Adrenal gland (tissue), 19 donors: ENCODE measurements at regions of chr15 and their contacts with region 1.

Region 1: DNA sequence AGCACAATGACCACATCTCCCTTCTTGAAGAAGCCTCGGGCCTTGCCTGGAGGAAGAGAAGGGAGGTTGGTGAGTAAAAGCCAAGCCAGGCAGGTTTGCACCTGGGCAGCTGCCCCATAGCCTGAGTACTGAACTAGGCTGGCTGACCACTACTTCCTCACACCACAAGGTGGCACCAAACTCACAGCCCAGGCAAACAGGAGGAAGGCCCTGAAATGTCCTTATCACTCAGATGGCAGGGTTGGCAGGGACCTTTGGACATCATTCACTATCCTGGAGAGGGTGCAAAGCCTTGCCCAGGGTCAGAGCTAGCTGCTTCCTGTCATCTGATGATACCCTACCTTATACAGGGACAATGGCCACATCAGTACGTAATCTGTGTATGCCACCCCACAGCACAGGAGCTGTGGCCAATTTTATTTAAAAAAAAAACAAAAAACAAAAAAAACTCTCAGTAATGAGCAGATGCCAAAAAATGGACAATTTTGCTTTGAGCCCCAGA is 2.2 kb upstream of the GRAMD2A start:
- DNase-seq: peak; percentile 85 to 95 (median 90)
- H3K4me3 ChIP-seq: no peak overlapping the region
- H3K27ac ChIP-seq: peak overlapping the region in 3 of 5 donors; percentile 37 to 80 (median 78)
- H3K4me1 ChIP-seq: peaks cover 0 to 33% of the 10 kb centered on the region in 2 donors
- H3K27me3 ChIP-seq: no peaks in the 10 kb centered on the region
- CTCF ChIP-seq: peak; percentile 83 to 96 (median 94)
- POLR2A ChIP-seq: no peak

Region 2: GRCh38 chr15:72231066-72231846 is 31.5 kb after region 1 on chr15 and contains the start of gene PKM:
- intact Hi-C with region 1: loop called in 1 of 2 experiments (anchors 5 kb)
- DNase-seq: peak; percentile 97 to 99 (median 98)
- H3K4me3 ChIP-seq: peak within 1 kb of the TSS; percentile 70 to 90 (median 74)
- H3K27ac ChIP-seq: peak within 1 kb of the TSS; percentile 90 to 99 (median 94)
- H3K4me1 ChIP-seq: peaks cover 36 to 42% of the 10 kb centered on the region in 2 donors
- H3K27me3 ChIP-seq: no peaks in the 10 kb centered on the region
- CTCF ChIP-seq: peak in 1 of 6 experiments; percentile 5
- POLR2A ChIP-seq: peak; percentile 98 to 99
- total RNA-seq, gene PKM: 396 to 1,257 (median 1,069) TPM

Region 3: GRCh38 chr15:72252663-72253299 is 53.0 kb after region 1 on chr15:
- intact Hi-C with region 1: loop called in 1 of 2 experiments (anchors 5 kb)
- DNase-seq: no peak
- H3K4me3 ChIP-seq: no peak overlapping the region
- H3K27ac ChIP-seq: no peak overlapping the region
- H3K4me1 ChIP-seq: peaks cover 10 to 16% of the 10 kb centered on the region in 2 donors
- H3K27me3 ChIP-seq: no peaks in the 10 kb centered on the region
- CTCF ChIP-seq: no peak
- POLR2A ChIP-seq: no peak

Region 4: GRCh38 chr15:72285927-72286516 is 86.3 kb after region 1 on chr15:
- intact Hi-C with region 1: loop called in 1 of 2 experiments (anchors 5 kb)
- DNase-seq: peak; percentile 48 to 77 (median 74)
- H3K4me3 ChIP-seq: no peak overlapping the region
- H3K27ac ChIP-seq: no peak overlapping the region
- H3K4me1 ChIP-seq: no peaks in the 10 kb centered on the region
- H3K27me3 ChIP-seq: no peaks in the 10 kb centered on the region
- CTCF ChIP-seq: peak; percentile 58 to 73 (median 70)
- POLR2A ChIP-seq: no peak